GM12878 (cell line): ENCODE measurements at regions of chr4 and their contacts with region 1.

Region 1: GRCh38 chr4:81565142-81565870 is 93.6 kb upstream of the RASGEF1B start:
- DNase-seq: no peak
- ATAC-seq: 0 out of 3 replicates have a peak, but pooled peaks have one; percentile 21
- H3K4me3 ChIP-seq: no peak overlapping the region
- H3K27ac ChIP-seq: no peak overlapping the region
- H3K4me1 ChIP-seq: peaks cover 28% of the 10 kb centered on the region
- H3K27me3 ChIP-seq: no peaks in the 10 kb centered on the region
- CTCF ChIP-seq: no peak
- EP300 ChIP-seq: no peak
- POLR2A ChIP-seq: no peak
- RAD21 ChIP-seq: no peak

Region 2: GRCh38 chr4:81196126-81196650 is 369.1 kb before region 1 on chr4:
- CTCF ChIA-PET with region 1: no interaction called
- POLR2A ChIA-PET with region 1: no interaction called
- RAD21 ChIA-PET with region 1: no interaction called
- SMC1A ChIA-PET with region 1: no interaction called
- in situ Hi-C with region 1: no loop called
- intact Hi-C with region 1: no loop called
- DNase-seq: no peak
- ATAC-seq: no peak
- H3K4me3 ChIP-seq: no peak overlapping the region
- H3K27ac ChIP-seq: no peak overlapping the region
- H3K4me1 ChIP-seq: no peaks in the 10 kb centered on the region
- H3K27me3 ChIP-seq: no peaks in the 10 kb centered on the region
- CTCF ChIP-seq: no peak
- EP300 ChIP-seq: no peak
- POLR2A ChIP-seq: no peak
- RAD21 ChIP-seq: no peak

Region 3: GRCh38 chr4:81505004-81505598 is 60.2 kb before region 1 on chr4:
- CTCF ChIA-PET with region 1: no interaction called
- POLR2A ChIA-PET with region 1: no interaction called
- RAD21 ChIA-PET with region 1: no interaction called
- SMC1A ChIA-PET with region 1: no interaction called
- in situ Hi-C with region 1: no loop called
- intact Hi-C with region 1: loop called (anchors 5 kb)
- DNase-seq: no peak
- ATAC-seq: peak; percentile 34
- H3K4me3 ChIP-seq: no peak overlapping the region
- H3K27ac ChIP-seq: no peak overlapping the region
- H3K4me1 ChIP-seq: no peaks in the 10 kb centered on the region
- H3K27me3 ChIP-seq: peaks cover 0 to 2% of the 10 kb centered on the region in 2 experiments; a peak in 1 of 4 replicates
- CTCF ChIP-seq: no peak
- EP300 ChIP-seq: no peak
- POLR2A ChIP-seq: no peak
- RAD21 ChIP-seq: 0 out of 2 replicates have a peak, but pooled peaks have one; percentile 5